ENCODE measurements at regions of chr3 and their contacts with region 1.

Region 1: DNA sequence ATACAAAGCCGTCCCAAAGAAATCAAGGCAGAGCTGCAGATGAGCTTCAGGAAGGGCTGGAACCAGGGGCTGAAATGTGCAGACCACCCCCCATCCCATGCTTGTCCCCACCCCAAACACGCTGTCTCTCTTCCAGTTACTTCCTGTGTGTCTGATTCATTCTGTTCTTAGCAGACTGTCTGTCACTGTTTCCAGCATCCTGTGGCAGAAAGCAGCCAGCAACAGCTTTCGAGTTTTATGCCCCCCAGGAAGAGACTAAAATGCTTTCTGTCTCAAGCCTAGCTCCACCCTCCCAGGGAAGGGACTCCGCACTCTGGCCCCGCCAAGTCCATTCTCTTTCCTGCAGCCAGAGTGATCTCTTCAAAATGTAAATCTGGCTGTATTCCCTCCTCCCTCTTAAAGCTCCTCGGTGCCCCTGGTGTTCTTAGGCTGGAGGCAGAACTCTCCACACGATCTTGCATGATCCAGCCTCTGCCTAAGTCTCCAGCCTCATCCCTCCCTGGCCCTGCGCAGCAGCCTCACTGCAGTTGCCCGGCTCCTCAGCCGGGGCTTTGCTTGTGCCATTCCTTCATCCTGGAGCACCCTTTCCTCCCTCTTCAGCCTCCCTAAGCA is 41.5 kb downstream of the HRH1 start:
- DNase-seq: no peak
- H3K4me3 ChIP-seq: no peak overlapping the region
- H3K27me3 ChIP-seq: no peaks in the 10 kb centered on the region
- CTCF ChIP-seq: no peak

Region 2: DNA sequence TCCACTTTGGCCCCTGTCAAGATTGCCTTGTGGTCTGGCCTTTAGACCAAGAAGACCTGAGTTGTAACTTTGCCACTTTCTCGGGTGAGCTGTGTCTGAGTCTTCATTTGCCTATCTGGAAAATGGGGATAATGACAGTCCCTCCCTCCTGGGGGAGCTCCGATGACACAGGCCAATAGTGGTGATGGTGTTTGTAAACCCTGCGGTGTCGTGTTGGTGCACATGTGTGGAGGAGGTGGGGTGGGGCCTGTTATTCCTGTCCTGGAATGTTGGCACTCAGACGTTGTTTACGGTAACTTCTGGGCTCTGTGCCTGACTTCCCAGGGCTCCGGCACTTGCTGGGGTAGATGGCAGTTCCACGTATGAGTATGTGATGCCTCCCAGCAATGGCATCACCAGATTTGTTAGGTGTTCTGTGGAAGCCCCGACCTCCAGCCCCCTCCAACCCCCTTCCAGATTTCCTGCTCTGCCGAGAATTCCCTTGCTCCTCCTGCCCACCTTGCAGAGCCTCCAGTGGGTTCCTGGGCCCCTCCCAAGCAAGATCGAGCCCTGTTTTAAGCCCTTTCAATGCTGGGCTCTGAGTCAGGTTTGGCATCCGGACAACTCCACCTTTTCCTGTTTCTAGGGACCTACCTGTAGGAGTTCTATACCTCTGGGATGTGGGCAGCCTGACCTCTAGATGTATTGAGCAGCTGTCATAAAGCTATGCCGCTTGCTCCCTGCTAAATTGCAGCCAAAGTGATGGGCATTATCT is 10.1 kb before region 1 on chr3:
- CTCF ChIA-PET with region 1: interaction called, 11 read pairs
- POLR2A ChIA-PET with region 1: interaction called, 4 read pairs
- DNase-seq: peak; percentile 92
- H3K4me3 ChIP-seq: no peak overlapping the region
- H3K27me3 ChIP-seq: no peaks in the 10 kb centered on the region
- CTCF ChIP-seq: 0 out of 2 replicates have a peak, but pooled peaks have one; percentile 3

Measured in BJ (cell line).